CD14-positive monocyte (primary cell): ENCODE measurements at regions of chr1 and their contacts with region 1.

Region 1: GRCh38 chr1:6026095-6026809 is 19.4 kb upstream of the KCNAB2 start:
- DNase-seq: peak; percentile 94 to 99 (median 98)
- H3K4me3 ChIP-seq: peak overlapping the region; percentile 51 to 80 (median 53)
- H3K4me3 Mint-ChIP-seq: peak overlapping the region; percentile 87 to 94
- H3K27ac ChIP-seq: peak overlapping the region; percentile 95 to 100
- H3K27ac Mint-ChIP-seq: peak overlapping the region; percentile 97 to 100 (median 99)
- H3K4me1 ChIP-seq: peaks cover 55 to 62% of the 10 kb centered on the region in 2 donors
- H3K4me1 Mint-ChIP-seq: peaks cover 55% of the 10 kb centered on the region
- H3K27me3 ChIP-seq: no peaks in the 10 kb centered on the region
- H3K27me3 Mint-ChIP-seq: peaks cover 0 to 4% (median 0%) of the 10 kb centered on the region in 3 donors
- CTCF ChIP-seq: no peak

Region 2: GRCh38 chr1:5992026-5992813 is 34.0 kb before region 1 on chr1 and contains the start of gene NPHP4:
- intact Hi-C with region 1: loop called (anchors 1 to 5 kb)
- DNase-seq: peak; percentile 98 to 99 (median 99)
- H3K4me3 ChIP-seq: peak within 1 kb of the TSS; percentile 54 to 83 (median 57)
- H3K4me3 Mint-ChIP-seq: peak within 1 kb of the TSS; percentile 85 to 92
- H3K27ac ChIP-seq: peak within 1 kb of the TSS; percentile 58 to 92
- H3K27ac Mint-ChIP-seq: peak within 1 kb of the TSS; percentile 62 to 93 (median 90)
- H3K4me1 ChIP-seq: peaks cover 32 to 37% of the 10 kb centered on the region in 2 donors
- H3K4me1 Mint-ChIP-seq: peaks cover 34% of the 10 kb centered on the region
- H3K27me3 ChIP-seq: no peaks in the 10 kb centered on the region
- H3K27me3 Mint-ChIP-seq: peaks cover 0 to 1% (median 1%) of the 10 kb centered on the region in 3 donors
- CTCF ChIP-seq: no peak
- polyA plus RNA-seq, gene NPHP4: 0.39 to 13.7 (median 1.2) TPM